MCF 10A (cell line): ENCODE measurements at regions of chr12 and their contacts with region 1.

Region 1: GRCh38 chr12:100348657-100349454 is 8.0 kb upstream of the SLC17A8 start:
- DNase-seq: peak; percentile 50
- H3K4me3 Mint-ChIP-seq: no peak overlapping the region
- H3K27ac Mint-ChIP-seq: no peak overlapping the region
- H3K4me1 Mint-ChIP-seq: no peaks in the 10 kb centered on the region
- H3K27me3 Mint-ChIP-seq: no peaks in the 10 kb centered on the region
- CTCF ChIP-seq: peak; percentile 38

Region 2: DNA sequence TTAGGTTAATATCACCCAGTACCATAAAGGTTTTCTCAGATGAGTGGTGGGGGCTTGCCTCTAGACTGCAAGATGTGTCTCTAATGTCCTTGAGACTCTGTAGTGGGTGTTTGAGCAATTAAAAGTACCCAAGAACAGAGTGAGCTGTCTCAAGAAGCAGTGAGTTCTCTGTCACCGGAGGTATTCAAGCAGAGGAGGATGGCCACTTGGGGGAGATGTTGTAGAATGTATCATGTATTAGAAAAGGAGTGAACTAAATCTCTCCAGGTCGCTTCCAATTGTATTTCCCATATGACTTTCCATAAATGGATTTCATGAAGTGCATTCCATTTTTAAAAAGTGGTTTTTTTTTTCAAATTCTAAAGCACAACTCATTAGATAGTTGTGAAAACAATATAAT is 43.0 kb after region 1 on chr12:
- CTCF ChIA-PET with region 1: interaction called, 6 read pairs
- POLR2A ChIA-PET with region 1: no interaction called
- intact Hi-C with region 1: loop called (anchors 5 kb)
- DNase-seq: peak; percentile 35
- H3K4me3 Mint-ChIP-seq: no peak overlapping the region
- H3K27ac Mint-ChIP-seq: no peak overlapping the region
- H3K4me1 Mint-ChIP-seq: no peaks in the 10 kb centered on the region
- H3K27me3 Mint-ChIP-seq: no peaks in the 10 kb centered on the region
- CTCF ChIP-seq: peak; percentile 28

Region 3: DNA sequence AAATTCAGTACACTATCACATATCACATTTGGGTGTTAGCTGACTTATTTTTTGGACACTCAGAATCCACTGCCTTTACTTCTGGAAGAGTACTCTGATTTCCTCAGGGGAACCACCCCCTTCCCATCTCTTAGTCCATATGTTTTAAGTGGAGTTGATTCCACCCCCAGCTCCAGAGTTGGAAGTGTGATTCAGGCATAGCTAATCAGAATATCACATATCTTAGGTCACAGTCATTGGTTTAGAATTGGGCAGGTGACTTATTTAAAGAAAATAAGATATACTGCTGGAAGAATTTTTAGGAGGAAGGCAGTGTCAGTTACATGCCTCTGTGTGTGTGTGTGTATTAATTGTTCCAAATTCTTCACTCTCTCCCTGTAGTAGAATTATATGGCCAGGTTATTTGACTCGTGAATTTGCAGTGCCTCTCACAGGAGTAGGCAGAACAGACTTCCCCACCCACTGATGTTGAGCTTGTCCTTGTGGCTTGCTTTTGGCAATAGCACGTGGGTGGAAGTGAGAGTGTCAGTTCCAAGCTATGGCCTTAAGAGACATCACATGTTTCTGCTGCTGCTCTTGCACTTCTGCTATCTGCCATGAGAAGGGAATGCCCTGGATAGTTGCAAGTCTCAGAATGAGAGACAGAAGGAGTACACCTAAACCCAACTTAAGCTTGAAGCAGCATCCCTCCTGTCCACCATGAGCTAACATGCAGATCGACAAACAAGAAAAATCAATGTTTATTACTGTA is 218.2 kb after region 1 on chr12:
- CTCF ChIA-PET with region 1: interaction called, 11 read pairs
- POLR2A ChIA-PET with region 1: interaction called, 3 read pairs
- intact Hi-C with region 1: no loop called
- DNase-seq: no peak
- H3K4me3 Mint-ChIP-seq: no peak overlapping the region
- H3K27ac Mint-ChIP-seq: no peak overlapping the region
- H3K4me1 Mint-ChIP-seq: peaks cover 8% of the 10 kb centered on the region
- H3K27me3 Mint-ChIP-seq: peaks cover 24% of the 10 kb centered on the region
- CTCF ChIP-seq: no peak

Region 4: DNA sequence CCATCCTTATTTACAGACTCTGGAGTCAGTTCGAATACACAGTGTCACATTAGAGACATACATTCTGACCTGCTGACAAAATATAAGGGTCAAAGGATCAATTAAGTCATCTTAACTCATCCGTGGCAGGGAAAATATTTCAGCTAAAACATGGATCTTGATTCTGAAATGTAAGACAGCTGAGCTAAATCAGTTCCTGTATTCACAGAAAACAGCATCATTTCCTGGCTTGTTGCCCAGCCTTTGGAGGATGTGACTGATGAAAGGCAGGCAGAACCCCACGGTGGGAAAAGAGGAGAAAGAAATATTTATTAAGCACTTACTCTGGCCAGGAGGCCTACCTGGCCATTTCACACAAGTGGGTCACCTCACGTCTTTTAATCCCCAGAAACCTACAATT is 326.6 kb after region 1 on chr12:
- CTCF ChIA-PET with region 1: interaction called, 12 read pairs
- POLR2A ChIA-PET with region 1: no interaction called
- intact Hi-C with region 1: loop called (anchors 5 kb)
- DNase-seq: peak; percentile 59
- H3K4me3 Mint-ChIP-seq: no peak overlapping the region
- H3K27ac Mint-ChIP-seq: no peak overlapping the region
- H3K4me1 Mint-ChIP-seq: no peaks in the 10 kb centered on the region
- H3K27me3 Mint-ChIP-seq: peaks cover 19% of the 10 kb centered on the region
- CTCF ChIP-seq: no peak